CD4-positive, alpha-beta memory T cell (primary cell): ENCODE measurements at regions of chr14 and their contacts with region 1.

Region 1: GRCh38 chr14:96027431-96028355 is 11.5 kb upstream of the C14orf132 start:
- DNase-seq: peak in 4 of 5 donors; percentile 21 to 35 (median 30)
- H3K4me3 ChIP-seq: no peak overlapping the region
- H3K4me3 Mint-ChIP-seq: peak overlapping the region; percentile 26 to 78 (median 63)
- H3K27ac ChIP-seq: no peak overlapping the region
- H3K27ac Mint-ChIP-seq: peak overlapping the region; percentile 53 to 92 (median 88)
- H3K4me1 ChIP-seq: peaks cover 20% of the 10 kb centered on the region
- H3K4me1 Mint-ChIP-seq: peaks cover 14 to 23% (median 18%) of the 10 kb centered on the region in 4 donors
- H3K27me3 ChIP-seq: no peaks in the 10 kb centered on the region
- H3K27me3 Mint-ChIP-seq: peaks cover 3 to 10% of the 10 kb centered on the region in 2 donors

Region 2: DNA sequence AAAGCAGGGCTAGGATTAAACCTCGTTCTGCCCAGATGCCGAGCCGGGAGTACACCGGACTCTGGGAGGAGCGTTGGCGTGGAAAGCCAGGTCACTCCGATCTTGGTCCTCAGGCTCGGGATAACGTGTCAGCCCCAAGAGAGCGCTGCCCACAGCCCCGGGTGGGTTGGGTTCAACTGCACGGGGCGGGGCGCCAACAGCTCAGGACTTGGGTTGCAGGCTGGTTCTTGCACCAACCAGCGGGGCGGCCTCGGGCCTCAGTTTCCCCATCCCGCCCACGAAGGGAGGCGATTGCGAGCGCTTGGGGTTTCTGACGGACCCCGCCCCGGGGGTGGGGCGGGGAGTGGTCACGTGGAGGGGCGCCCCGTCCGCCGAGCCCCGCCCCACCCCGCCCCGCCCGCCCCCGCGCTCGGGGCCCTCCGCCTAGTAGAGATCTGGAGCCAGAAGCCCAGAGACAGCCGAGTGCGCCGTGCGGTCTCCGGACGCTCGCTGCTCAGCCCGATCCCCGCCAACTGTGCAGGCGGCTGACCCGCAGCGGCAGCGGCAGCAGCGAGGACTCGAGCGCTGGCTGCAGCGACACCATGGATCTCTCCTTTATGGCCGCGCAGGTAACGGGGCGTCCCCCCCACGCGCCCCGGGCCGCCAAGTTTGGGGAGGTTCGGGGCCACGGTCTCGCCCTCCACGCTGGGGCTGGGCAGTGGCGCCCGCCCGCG is 11.4 kb after region 1 on chr14 and contains the start of gene C14orf132:
- CTCF ChIA-PET with region 1: no interaction called
- POLR2A ChIA-PET with region 1: interaction called, 17 read pairs
- intact Hi-C with region 1: no loop called
- DNase-seq: peak in 4 of 5 donors; percentile 20 to 34 (median 26)
- H3K4me3 ChIP-seq: peak within 1 kb of the TSS in 1 of 2 donors; percentile 45
- H3K4me3 Mint-ChIP-seq: peak within 1 kb of the TSS; percentile 75 to 88 (median 84)
- H3K27ac ChIP-seq: no peak within 1 kb of the TSS
- H3K27ac Mint-ChIP-seq: peak within 1 kb of the TSS in 3 of 7 donors; percentile 38 to 70 (median 55)
- H3K4me1 ChIP-seq: peaks cover 16% of the 10 kb centered on the region
- H3K4me1 Mint-ChIP-seq: peaks cover 9 to 33% (median 20%) of the 10 kb centered on the region in 4 donors
- H3K27me3 ChIP-seq: no peaks in the 10 kb centered on the region
- H3K27me3 Mint-ChIP-seq: peaks cover 25 to 31% of the 10 kb centered on the region in 2 donors
- total RNA-seq, gene C14orf132: 18.2 to 20.6 TPM